PC-3 (cell line): ENCODE measurements at regions of chr16 and their contacts with region 1.

Region 1: GRCh38 chr16:67672739-67673662 is 6.4 kb downstream of the C16orf86 start:
- DNase-seq: peak; percentile 59
- ATAC-seq: peak; percentile 53
- H3K4me3 ChIP-seq: no peak overlapping the region
- H3K27ac ChIP-seq: no peak overlapping the region
- H3K4me1 ChIP-seq: peaks cover 5% of the 10 kb centered on the region
- H3K27me3 ChIP-seq: no peaks in the 10 kb centered on the region
- CTCF ChIP-seq: peak; percentile 87

Region 2: GRCh38 chr16:67415872-67416793 is 256.9 kb before region 1 on chr16 and contains the start of gene ZDHHC1:
- CTCF ChIA-PET with region 1: no interaction called
- POLR2A ChIA-PET with region 1: no interaction called
- intact Hi-C with region 1: no loop called
- DNase-seq: peak; percentile 61
- ATAC-seq: peak; percentile 95
- H3K4me3 ChIP-seq: peak within 1 kb of the TSS; percentile 73
- H3K27ac ChIP-seq: 0 out of 2 replicates have a peak within 1 kb of the TSS, but pooled peaks have one; percentile 1
- H3K4me1 ChIP-seq: peaks cover 8% of the 10 kb centered on the region; the same call in 1 of the 2 replicates
- H3K27me3 ChIP-seq: no peaks in the 10 kb centered on the region
- CTCF ChIP-seq: peak; percentile 59
- total RNA-seq, gene ZDHHC1: 4.8 and 5.1 TPM in 2 replicates

Region 3: GRCh38 chr16:67595033-67595355 is 78.0 kb before region 1 on chr16:
- CTCF ChIA-PET with region 1: no interaction called
- POLR2A ChIA-PET with region 1: no interaction called
- intact Hi-C with region 1: no loop called
- DNase-seq: peak; percentile 55
- ATAC-seq: peak; percentile 65
- H3K4me3 ChIP-seq: no peak overlapping the region
- H3K27ac ChIP-seq: no peak overlapping the region
- H3K4me1 ChIP-seq: peaks cover 11% of the 10 kb centered on the region
- H3K27me3 ChIP-seq: no peaks in the 10 kb centered on the region
- CTCF ChIP-seq: no peak

Region 4: DNA sequence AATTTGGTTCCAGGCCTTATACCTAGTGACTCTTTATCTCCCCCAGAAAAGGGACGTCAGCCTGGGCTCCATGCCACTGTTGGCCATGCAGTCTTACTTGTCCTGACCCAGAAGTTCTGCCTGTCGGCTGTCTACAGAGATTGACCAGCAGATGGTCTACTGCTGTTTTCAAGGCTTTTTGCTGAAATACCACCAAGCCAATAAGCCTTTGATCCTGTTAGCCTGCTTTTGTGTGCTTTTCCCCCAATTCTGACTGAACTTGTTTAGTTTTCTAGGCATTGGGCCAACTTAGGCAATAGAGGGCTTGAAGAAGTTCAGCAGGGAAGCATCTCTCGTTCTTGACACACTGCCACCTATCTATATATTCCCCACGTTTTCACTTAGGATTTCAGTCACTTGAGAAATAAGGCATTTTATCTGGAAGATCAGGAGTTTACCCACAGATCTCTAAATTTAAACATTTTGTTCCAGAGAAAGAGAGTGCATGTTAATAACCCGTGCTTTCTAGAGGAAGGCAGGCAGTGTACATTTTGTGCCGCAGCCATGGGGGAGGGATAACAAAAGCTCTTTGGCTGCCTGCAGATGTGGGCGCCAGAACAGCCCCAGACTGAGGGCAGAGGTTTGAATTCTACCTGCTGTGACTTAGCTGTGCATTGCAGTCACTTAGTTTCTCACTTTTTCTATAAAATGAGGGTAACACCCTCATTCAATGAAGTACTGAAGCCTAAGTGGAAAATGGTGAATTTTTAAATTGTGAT is 40.4 kb before region 1 on chr16:
- CTCF ChIA-PET with region 1: no interaction called
- POLR2A ChIA-PET with region 1: no interaction called
- intact Hi-C with region 1: no loop called
- DNase-seq: no peak
- ATAC-seq: no peak
- H3K4me3 ChIP-seq: no peak overlapping the region
- H3K27ac ChIP-seq: no peak overlapping the region
- H3K4me1 ChIP-seq: no peaks in the 10 kb centered on the region
- H3K27me3 ChIP-seq: no peaks in the 10 kb centered on the region
- CTCF ChIP-seq: no peak

Region 5: DNA sequence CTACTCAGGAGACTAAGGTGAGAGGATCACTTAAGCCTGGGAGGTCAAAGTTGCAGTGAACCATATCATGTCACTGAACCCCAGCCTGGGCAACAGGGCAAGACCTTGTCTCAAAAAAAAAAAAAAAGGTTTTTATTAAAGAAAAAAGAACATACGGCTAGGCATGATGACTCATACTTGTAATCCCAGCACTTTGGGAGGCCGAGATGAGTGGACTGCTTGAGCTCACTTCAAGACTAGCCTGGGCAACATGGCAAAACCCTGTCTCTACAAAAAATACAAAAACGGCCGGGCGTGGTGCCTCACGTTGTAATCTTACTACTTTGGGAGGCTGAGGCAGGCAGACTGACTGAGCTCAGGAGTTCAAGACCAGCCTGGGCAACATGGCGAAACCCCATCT is 95.0 kb after region 1 on chr16:
- CTCF ChIA-PET with region 1: interaction called, 10 read pairs
- POLR2A ChIA-PET with region 1: no interaction called
- intact Hi-C with region 1: no loop called
- DNase-seq: peak; percentile 9
- ATAC-seq: peak; percentile 48; the same call in 1 of the 2 replicates
- H3K4me3 ChIP-seq: no peak overlapping the region
- H3K27ac ChIP-seq: no peak overlapping the region
- H3K4me1 ChIP-seq: no peaks in the 10 kb centered on the region
- H3K27me3 ChIP-seq: no peaks in the 10 kb centered on the region
- CTCF ChIP-seq: no peak

Region 6: GRCh38 chr16:67806428-67807147 is 133.6 kb after region 1 on chr16 and contains the starts of genes RANBP10 and TSNAXIP1:
- CTCF ChIA-PET with region 1: interaction called, 5 read pairs
- POLR2A ChIA-PET with region 1: no interaction called
- intact Hi-C with region 1: loop called (anchors 1 kb)
- DNase-seq: peak; percentile 95
- ATAC-seq: peak; percentile 93
- H3K4me3 ChIP-seq: peak within 1 kb of the TSS; percentile 99
- H3K27ac ChIP-seq: no peak within 1 kb of the TSS
- H3K4me1 ChIP-seq: peaks cover 10% of the 10 kb centered on the region
- H3K27me3 ChIP-seq: no peaks in the 10 kb centered on the region
- CTCF ChIP-seq: no peak
- total RNA-seq, gene RANBP10: 5.5 and 7.7 TPM in 2 replicates
- total RNA-seq, gene TSNAXIP1: 0.44 and 0.86 TPM in 2 replicates